GM12878 (cell line): ENCODE measurements at regions of chr3 and their contacts with region 1.

Region 1: DNA sequence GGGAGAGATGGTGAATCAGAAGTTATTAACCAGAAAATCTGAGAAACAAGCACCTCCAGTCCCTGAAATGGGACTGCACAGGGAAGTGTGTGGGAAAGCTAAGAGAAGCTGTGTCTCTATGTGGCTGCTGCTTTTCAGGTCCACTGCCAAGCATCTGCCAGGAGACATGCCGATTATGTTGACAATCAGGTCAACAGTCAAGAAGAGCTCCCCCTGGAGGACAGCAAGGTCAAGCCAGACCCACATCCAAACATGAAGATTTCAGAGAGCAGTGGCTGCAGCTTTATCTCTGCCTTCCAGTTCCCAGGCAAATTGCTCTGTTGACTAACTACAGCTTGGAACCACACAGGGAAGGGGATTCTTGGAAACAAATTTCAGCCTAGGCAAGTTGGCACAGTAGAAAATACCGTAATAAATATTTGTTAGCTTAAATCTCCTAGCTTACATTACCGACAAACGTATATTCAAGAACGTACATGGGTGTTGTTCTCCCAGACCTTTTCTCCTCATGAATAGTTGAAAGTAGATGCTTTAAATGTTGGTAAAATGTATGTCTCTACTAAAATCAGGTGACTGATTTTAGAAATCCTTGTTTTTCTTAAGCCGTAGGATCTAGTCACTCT is 394.5 kb upstream of the RARB start:
- DNase-seq: no peak
- ATAC-seq: peak; percentile 89
- H3K4me3 ChIP-seq: no peak overlapping the region
- H3K27ac ChIP-seq: no peak overlapping the region
- H3K4me1 ChIP-seq: no peaks in the 10 kb centered on the region
- H3K27me3 ChIP-seq: no peaks in the 10 kb centered on the region
- CTCF ChIP-seq: peak; percentile 52 to 73 (median 72)
- EP300 ChIP-seq: no peak
- POLR2A ChIP-seq: no peak
- RAD21 ChIP-seq: peak; percentile 37; the same call in 1 of the 2 replicates

Region 2: GRCh38 chr3:24680214-24680967 is 353.1 kb before region 1 on chr3:
- CTCF ChIA-PET with region 1: interaction called, 19 read pairs
- POLR2A ChIA-PET with region 1: no interaction called
- RAD21 ChIA-PET with region 1: interaction called, 4 read pairs
- SMC1A ChIA-PET with region 1: no interaction called
- in situ Hi-C with region 1: no loop called
- intact Hi-C with region 1: no loop called
- DNase-seq: no peak
- ATAC-seq: peak; percentile 95
- H3K4me3 ChIP-seq: no peak overlapping the region
- H3K27ac ChIP-seq: no peak overlapping the region
- H3K4me1 ChIP-seq: no peaks in the 10 kb centered on the region
- H3K27me3 ChIP-seq: no peaks in the 10 kb centered on the region; a peak in 1 of 4 replicates
- CTCF ChIP-seq: peak; percentile 74 to 84 (median 81)
- EP300 ChIP-seq: no peak
- POLR2A ChIP-seq: no peak
- RAD21 ChIP-seq: peak; percentile 53

Region 3: DNA sequence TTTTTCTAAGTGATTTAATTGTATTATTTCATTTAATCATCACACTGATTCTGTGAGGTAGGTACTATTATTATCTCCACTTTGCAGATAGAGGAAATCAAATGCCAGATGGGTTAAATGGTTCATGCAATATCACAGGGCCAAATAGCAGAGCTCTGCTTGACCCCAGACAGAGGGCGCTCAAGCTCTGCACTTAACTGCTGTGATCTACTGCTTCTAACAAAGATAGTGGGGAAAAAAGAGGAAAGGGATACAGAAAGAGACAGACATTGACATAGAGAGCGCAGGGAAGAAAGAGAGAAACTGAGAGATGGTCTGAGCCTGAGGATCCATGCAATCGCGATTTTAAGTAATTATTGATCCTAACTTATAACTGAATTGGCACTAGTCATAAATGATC is 259.7 kb before region 1 on chr3:
- CTCF ChIA-PET with region 1: interaction called, 66 read pairs
- POLR2A ChIA-PET with region 1: no interaction called
- RAD21 ChIA-PET with region 1: interaction called, 6 read pairs
- SMC1A ChIA-PET with region 1: interaction called, 6 read pairs
- in situ Hi-C with region 1: loop called (anchors 5 kb)
- intact Hi-C with region 1: loop called (anchors 1 kb)
- DNase-seq: no peak
- ATAC-seq: peak; percentile 91
- H3K4me3 ChIP-seq: no peak overlapping the region
- H3K27ac ChIP-seq: no peak overlapping the region
- H3K4me1 ChIP-seq: no peaks in the 10 kb centered on the region
- H3K27me3 ChIP-seq: no peaks in the 10 kb centered on the region
- CTCF ChIP-seq: peak; percentile 66 to 75 (median 66)
- EP300 ChIP-seq: no peak
- POLR2A ChIP-seq: no peak
- RAD21 ChIP-seq: peak; percentile 79

Region 4: GRCh38 chr3:25007974-25008658 is 25.4 kb before region 1 on chr3:
- CTCF ChIA-PET with region 1: interaction called, 12 read pairs
- POLR2A ChIA-PET with region 1: no interaction called
- RAD21 ChIA-PET with region 1: no interaction called
- SMC1A ChIA-PET with region 1: interaction called, 3 read pairs
- in situ Hi-C with region 1: no loop called
- intact Hi-C with region 1: no loop called
- DNase-seq: peak; percentile 15
- ATAC-seq: peak; percentile 90
- H3K4me3 ChIP-seq: no peak overlapping the region
- H3K27ac ChIP-seq: no peak overlapping the region
- H3K4me1 ChIP-seq: no peaks in the 10 kb centered on the region; the same call in 1 of the 2 replicates
- H3K27me3 ChIP-seq: no peaks in the 10 kb centered on the region
- CTCF ChIP-seq: no peak
- EP300 ChIP-seq: no peak
- POLR2A ChIP-seq: no peak
- RAD21 ChIP-seq: no peak

Region 5: GRCh38 chr3:25021816-25022215 is 11.7 kb before region 1 on chr3:
- CTCF ChIA-PET with region 1: interaction called, 24 read pairs
- POLR2A ChIA-PET with region 1: no interaction called
- RAD21 ChIA-PET with region 1: interaction called, 3 read pairs
- SMC1A ChIA-PET with region 1: interaction called, 8 read pairs
- in situ Hi-C with region 1: no loop called
- intact Hi-C with region 1: no loop called
- DNase-seq: no peak
- ATAC-seq: no peak
- H3K4me3 ChIP-seq: no peak overlapping the region
- H3K27ac ChIP-seq: no peak overlapping the region
- H3K4me1 ChIP-seq: no peaks in the 10 kb centered on the region
- H3K27me3 ChIP-seq: no peaks in the 10 kb centered on the region; a peak in 1 of 4 replicates
- CTCF ChIP-seq: peak; percentile 14 to 23 (median 19); a peak in 2 of 6 replicates
- EP300 ChIP-seq: no peak
- POLR2A ChIP-seq: no peak
- RAD21 ChIP-seq: 0 out of 2 replicates have a peak, but pooled peaks have one; percentile 24

Region 6: DNA sequence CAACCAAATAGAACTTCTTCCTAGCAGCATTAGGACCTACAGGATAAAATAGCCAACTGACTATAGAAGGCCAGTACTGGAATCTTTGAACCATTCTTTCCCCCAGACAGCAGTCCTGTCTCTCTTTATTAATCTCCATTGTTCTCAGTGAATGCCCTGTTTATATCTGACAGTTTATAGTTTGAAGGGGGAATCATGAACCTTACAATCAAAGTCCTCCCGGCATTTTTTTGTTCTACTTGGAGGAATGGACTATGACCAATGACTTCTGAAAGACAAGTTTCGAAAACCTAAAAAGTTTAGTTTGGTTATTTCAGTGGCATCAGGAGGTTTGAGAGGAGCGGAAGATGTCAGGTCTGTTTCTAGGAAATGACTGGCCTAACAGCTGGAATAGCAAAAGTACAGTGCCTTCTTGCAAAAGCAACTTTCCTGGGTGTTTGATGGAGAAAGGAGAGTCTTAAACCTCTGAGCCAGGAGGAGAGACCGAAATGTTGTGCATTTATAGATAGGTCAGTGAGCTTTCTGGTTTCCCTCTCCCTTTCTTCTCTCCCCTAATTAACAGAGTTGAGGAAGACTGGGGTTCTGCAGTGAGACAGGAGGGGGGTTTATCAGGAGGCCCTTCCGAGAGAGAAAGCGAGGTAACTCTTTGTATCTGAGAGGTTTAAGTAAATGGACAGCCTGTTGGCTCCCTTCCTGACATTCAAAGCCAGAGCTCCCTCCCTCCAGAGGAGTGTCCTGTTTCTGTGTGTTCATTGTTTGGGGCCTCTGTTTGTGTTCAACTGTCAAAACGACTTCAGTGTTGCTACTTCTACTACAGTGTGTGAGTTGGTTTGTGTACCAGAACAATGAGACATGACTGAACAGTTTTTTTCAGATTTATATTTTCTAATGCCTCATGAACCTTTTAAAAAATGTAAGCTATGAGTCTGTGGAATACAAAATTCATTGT is 11.5 kb after region 1 on chr3:
- CTCF ChIA-PET with region 1: interaction called, 23 read pairs
- POLR2A ChIA-PET with region 1: no interaction called
- RAD21 ChIA-PET with region 1: no interaction called
- SMC1A ChIA-PET with region 1: interaction called, 4 read pairs
- in situ Hi-C with region 1: no loop called
- intact Hi-C with region 1: no loop called
- DNase-seq: no peak
- ATAC-seq: no peak
- H3K4me3 ChIP-seq: no peak overlapping the region
- H3K27ac ChIP-seq: no peak overlapping the region
- H3K4me1 ChIP-seq: no peaks in the 10 kb centered on the region
- H3K27me3 ChIP-seq: no peaks in the 10 kb centered on the region
- CTCF ChIP-seq: no peak
- EP300 ChIP-seq: no peak
- POLR2A ChIP-seq: no peak
- RAD21 ChIP-seq: no peak

Region 7: GRCh38 chr3:25057379-25057778 is 23.9 kb after region 1 on chr3:
- CTCF ChIA-PET with region 1: interaction called, 11 read pairs
- POLR2A ChIA-PET with region 1: no interaction called
- RAD21 ChIA-PET with region 1: no interaction called
- SMC1A ChIA-PET with region 1: interaction called, 3 read pairs
- in situ Hi-C with region 1: no loop called
- intact Hi-C with region 1: no loop called
- DNase-seq: no peak
- ATAC-seq: no peak
- H3K4me3 ChIP-seq: no peak overlapping the region
- H3K27ac ChIP-seq: no peak overlapping the region
- H3K4me1 ChIP-seq: no peaks in the 10 kb centered on the region
- H3K27me3 ChIP-seq: no peaks in the 10 kb centered on the region
- CTCF ChIP-seq: no peak
- EP300 ChIP-seq: no peak
- POLR2A ChIP-seq: no peak
- RAD21 ChIP-seq: no peak

Region 8: DNA sequence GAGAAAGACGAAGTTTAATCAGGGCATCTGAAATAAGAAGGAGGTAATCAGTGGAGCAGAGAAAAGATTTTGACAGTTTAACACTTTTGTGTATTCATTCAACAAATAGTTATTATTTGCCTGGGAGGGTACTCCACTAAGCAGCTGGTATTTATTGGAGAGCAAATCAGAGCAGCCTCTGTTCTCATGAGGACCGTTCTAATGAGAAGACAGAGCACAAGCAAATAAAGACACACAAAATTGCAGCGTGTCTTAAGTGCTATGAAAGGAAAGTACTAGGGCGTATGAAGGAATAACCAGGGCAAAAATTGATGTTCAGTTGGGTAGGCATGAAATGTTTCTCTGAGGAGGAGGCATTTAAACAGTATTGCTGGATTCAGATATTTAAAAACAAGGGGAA is 91.7 kb after region 1 on chr3:
- CTCF ChIA-PET with region 1: no interaction called
- POLR2A ChIA-PET with region 1: no interaction called
- RAD21 ChIA-PET with region 1: no interaction called
- SMC1A ChIA-PET with region 1: no interaction called
- in situ Hi-C with region 1: no loop called
- intact Hi-C with region 1: no loop called
- DNase-seq: no peak
- ATAC-seq: no peak
- H3K4me3 ChIP-seq: no peak overlapping the region
- H3K27ac ChIP-seq: no peak overlapping the region
- H3K4me1 ChIP-seq: no peaks in the 10 kb centered on the region
- H3K27me3 ChIP-seq: no peaks in the 10 kb centered on the region
- CTCF ChIP-seq: no peak
- EP300 ChIP-seq: no peak
- POLR2A ChIP-seq: no peak
- RAD21 ChIP-seq: no peak

Region 9: GRCh38 chr3:25246913-25247312 is 213.4 kb after region 1 on chr3:
- CTCF ChIA-PET with region 1: no interaction called
- POLR2A ChIA-PET with region 1: no interaction called
- RAD21 ChIA-PET with region 1: no interaction called
- SMC1A ChIA-PET with region 1: no interaction called
- in situ Hi-C with region 1: no loop called
- intact Hi-C with region 1: no loop called
- DNase-seq: no peak
- ATAC-seq: no peak
- H3K4me3 ChIP-seq: no peak overlapping the region
- H3K27ac ChIP-seq: no peak overlapping the region
- H3K4me1 ChIP-seq: no peaks in the 10 kb centered on the region
- H3K27me3 ChIP-seq: no peaks in the 10 kb centered on the region
- CTCF ChIP-seq: no peak
- EP300 ChIP-seq: no peak
- POLR2A ChIP-seq: no peak
- RAD21 ChIP-seq: no peak